Calu3 (cell line): ENCODE measurements at regions of chr21 and their contacts with region 1.

Region 1: GRCh38 chr21:33360881-33361602 is 36.3 kb downstream of the IFNAR1 start:
- DNase-seq: peak; percentile 83
- H3K4me3 Mint-ChIP-seq: peak overlapping the region; percentile 0
- H3K27ac Mint-ChIP-seq: no peak overlapping the region
- H3K4me1 Mint-ChIP-seq: peaks cover 8% of the 10 kb centered on the region
- H3K27me3 Mint-ChIP-seq: no peaks in the 10 kb centered on the region
- CTCF ChIP-seq: peak; percentile 67

Region 2: DNA sequence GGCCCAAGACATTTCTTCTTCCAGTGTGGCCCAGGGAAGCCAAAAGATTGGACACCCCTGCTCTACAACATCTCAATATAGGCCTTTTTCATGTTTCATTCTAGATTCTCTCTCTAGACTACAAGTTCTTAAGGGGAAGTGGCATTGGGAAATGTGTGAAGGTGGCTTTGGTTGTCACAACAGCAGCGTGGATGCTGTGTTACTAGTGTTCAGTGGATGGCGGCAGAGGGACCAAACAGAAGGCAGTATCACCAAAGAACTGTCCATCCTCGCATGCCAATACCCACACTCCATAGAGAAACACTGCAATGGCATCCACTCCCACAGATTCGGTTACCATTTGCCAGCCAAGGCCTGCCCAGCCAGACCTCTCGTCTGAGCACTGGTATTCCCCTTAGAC is 155.6 kb before region 1 on chr21:
- CTCF ChIA-PET with region 1: interaction called, 10 read pairs
- intact Hi-C with region 1: no loop called
- DNase-seq: no peak
- H3K4me3 Mint-ChIP-seq: no peak overlapping the region
- H3K27ac Mint-ChIP-seq: peak overlapping the region; percentile 87
- H3K4me1 Mint-ChIP-seq: peaks cover 28% of the 10 kb centered on the region
- H3K27me3 Mint-ChIP-seq: no peaks in the 10 kb centered on the region
- CTCF ChIP-seq: no peak

Region 3: GRCh38 chr21:33380483-33380998 is 19.5 kb after region 1 on chr21:
- CTCF ChIA-PET with region 1: interaction called, 16 read pairs
- intact Hi-C with region 1: no loop called
- DNase-seq: peak; percentile 93
- H3K4me3 Mint-ChIP-seq: no peak overlapping the region
- H3K27ac Mint-ChIP-seq: peak overlapping the region; percentile 74
- H3K4me1 Mint-ChIP-seq: peaks cover 18% of the 10 kb centered on the region
- H3K27me3 Mint-ChIP-seq: no peaks in the 10 kb centered on the region
- CTCF ChIP-seq: no peak

Region 4: GRCh38 chr21:33412832-33413519 is 51.9 kb after region 1 on chr21:
- CTCF ChIA-PET with region 1: interaction called, 7 read pairs
- intact Hi-C with region 1: loop called (anchors 2 kb)
- DNase-seq: peak; percentile 46
- H3K4me3 Mint-ChIP-seq: peak overlapping the region; percentile 44
- H3K27ac Mint-ChIP-seq: peak overlapping the region; percentile 81
- H3K4me1 Mint-ChIP-seq: peaks cover 40% of the 10 kb centered on the region
- H3K27me3 Mint-ChIP-seq: no peaks in the 10 kb centered on the region
- CTCF ChIP-seq: no peak

Region 5: GRCh38 chr21:33441489-33442477 is 80.7 kb after region 1 on chr21:
- CTCF ChIA-PET with region 1: interaction called, 24 read pairs
- intact Hi-C with region 1: loop called (anchors 2 kb)
- DNase-seq: no peak
- H3K4me3 Mint-ChIP-seq: no peak overlapping the region
- H3K27ac Mint-ChIP-seq: no peak overlapping the region
- H3K4me1 Mint-ChIP-seq: no peaks in the 10 kb centered on the region
- H3K27me3 Mint-ChIP-seq: no peaks in the 10 kb centered on the region
- CTCF ChIP-seq: no peak

Region 6: GRCh38 chr21:33514229-33514628 is 153.2 kb after region 1 on chr21:
- CTCF ChIA-PET with region 1: no interaction called
- intact Hi-C with region 1: no loop called
- DNase-seq: no peak
- H3K4me3 Mint-ChIP-seq: no peak overlapping the region
- H3K27ac Mint-ChIP-seq: no peak overlapping the region
- H3K4me1 Mint-ChIP-seq: no peaks in the 10 kb centered on the region
- H3K27me3 Mint-ChIP-seq: no peaks in the 10 kb centered on the region
- CTCF ChIP-seq: no peak